Gastrocnemius medialis (tissue), 4 donors: ENCODE measurements at regions of chrX and their contacts with region 1.

Region 1: DNA sequence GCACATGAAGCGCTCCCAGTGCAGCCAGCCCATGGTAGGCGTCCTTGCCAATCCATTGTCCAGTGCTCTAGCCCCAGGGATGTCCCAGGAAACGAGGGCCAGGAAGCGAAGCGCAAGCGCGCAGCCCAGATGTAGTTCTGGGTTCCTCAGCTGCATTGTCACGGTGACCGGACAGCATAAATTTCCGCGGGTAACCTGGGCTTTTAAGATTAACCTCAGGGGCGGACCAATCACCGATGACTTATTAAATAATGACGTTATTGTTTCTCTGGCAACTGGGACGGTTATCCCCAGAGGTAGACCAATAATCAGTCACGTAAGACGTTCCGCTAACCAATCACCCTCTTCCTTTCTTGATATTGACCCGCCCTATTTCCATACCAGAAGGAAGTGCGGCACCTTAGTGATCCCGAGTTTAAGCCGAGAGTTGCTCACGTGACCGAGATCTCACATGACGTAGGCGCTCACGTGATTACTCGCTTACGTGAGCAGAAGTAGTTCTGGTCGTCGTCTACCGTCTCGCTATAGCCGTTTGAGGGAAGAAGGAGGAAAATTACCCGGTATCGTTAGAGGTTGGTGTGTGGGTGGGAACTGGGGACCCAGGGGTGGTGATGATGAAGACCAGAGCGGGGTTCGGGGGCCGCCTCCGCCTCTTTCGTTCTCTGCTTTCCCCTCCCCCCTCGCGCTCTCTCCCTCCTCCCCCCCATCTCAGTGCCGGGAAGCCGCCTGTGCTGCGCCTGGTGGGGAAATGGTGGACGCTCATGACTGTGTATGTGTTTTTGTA is at the starts of genes GLA and HNRNPH2:
- DNase-seq: peak; percentile 89 to 95
- ATAC-seq: peak; percentile 98 to 99
- H3K4me3 ChIP-seq: peak within 1 kb of the TSS; percentile 69 to 83 (median 70)
- H3K27ac ChIP-seq: peak within 1 kb of the TSS; percentile 89 to 96 (median 94)
- H3K4me1 ChIP-seq: peaks cover 20 to 24% of the 10 kb centered on the region in 2 donors
- H3K27me3 ChIP-seq: no peaks in the 10 kb centered on the region
- CTCF ChIP-seq: peak in 2 of 5 experiments; percentile 6 to 25
- POLR2A ChIP-seq: peak; percentile 78 to 83
- total RNA-seq, gene GLA: 13.4 to 16.3 (median 14.6) TPM
- total RNA-seq, gene HNRNPH2: 33.8 to 58.1 (median 43.3) TPM

Region 2: DNA sequence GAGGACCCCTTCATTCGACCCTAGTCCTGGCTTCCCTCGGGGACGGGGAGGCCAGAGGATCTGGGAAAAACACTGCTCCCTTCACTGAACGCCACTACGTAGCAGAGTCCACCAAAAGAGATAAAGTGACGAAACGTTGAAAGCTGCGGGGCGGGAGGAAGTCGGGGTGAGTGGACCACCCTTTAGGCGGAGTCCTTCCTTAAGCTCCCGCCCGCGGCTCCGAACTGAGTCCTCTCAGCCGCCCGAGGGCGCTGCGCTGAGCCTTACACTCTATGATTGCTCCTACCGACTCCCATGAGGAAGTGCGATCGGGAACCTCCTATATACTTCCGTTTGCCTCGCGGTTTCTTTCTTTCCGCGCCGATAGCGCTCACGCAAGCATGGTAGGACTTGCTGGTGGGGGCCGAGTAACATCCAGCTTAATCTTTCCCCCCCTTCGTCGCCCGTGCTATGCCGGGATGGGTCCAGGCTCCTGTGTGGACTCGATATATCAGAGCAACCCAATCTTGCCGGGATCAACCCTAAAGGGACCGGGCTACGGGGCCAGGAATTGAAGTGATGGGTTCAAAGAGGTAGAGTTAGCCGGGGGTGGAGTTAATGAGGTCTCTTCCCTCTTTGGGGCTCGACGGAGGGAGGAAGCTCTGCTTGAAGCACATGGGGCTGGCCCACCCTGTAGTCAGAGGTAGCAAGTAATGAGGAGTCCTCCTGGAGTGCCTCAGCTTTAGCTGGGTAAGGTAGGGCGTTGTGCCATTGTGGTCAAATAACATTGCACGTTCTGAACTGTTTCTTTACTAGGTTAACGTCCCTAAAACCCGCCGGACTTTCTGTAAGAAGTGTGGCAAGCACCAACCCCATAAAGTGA is 17.0 kb before region 1 on chrX and contains the start of gene RPL36A:
- in situ Hi-C with region 1: no loop called
- intact Hi-C with region 1: loop called (anchors 2 kb)
- DNase-seq: peak; percentile 71 to 82
- ATAC-seq: peak; percentile 99
- H3K4me3 ChIP-seq: peak within 1 kb of the TSS; percentile 65 to 73 (median 70)
- H3K27ac ChIP-seq: peak within 1 kb of the TSS; percentile 78 to 89 (median 81)
- H3K4me1 ChIP-seq: no peaks in the 10 kb centered on the region
- H3K27me3 ChIP-seq: no peaks in the 10 kb centered on the region
- CTCF ChIP-seq: peak; percentile 43 to 75 (median 55)
- POLR2A ChIP-seq: peak; percentile 86 to 87
- total RNA-seq, gene RPL36A: 627 to 1,470 (median 1,100) TPM

Region 3: DNA sequence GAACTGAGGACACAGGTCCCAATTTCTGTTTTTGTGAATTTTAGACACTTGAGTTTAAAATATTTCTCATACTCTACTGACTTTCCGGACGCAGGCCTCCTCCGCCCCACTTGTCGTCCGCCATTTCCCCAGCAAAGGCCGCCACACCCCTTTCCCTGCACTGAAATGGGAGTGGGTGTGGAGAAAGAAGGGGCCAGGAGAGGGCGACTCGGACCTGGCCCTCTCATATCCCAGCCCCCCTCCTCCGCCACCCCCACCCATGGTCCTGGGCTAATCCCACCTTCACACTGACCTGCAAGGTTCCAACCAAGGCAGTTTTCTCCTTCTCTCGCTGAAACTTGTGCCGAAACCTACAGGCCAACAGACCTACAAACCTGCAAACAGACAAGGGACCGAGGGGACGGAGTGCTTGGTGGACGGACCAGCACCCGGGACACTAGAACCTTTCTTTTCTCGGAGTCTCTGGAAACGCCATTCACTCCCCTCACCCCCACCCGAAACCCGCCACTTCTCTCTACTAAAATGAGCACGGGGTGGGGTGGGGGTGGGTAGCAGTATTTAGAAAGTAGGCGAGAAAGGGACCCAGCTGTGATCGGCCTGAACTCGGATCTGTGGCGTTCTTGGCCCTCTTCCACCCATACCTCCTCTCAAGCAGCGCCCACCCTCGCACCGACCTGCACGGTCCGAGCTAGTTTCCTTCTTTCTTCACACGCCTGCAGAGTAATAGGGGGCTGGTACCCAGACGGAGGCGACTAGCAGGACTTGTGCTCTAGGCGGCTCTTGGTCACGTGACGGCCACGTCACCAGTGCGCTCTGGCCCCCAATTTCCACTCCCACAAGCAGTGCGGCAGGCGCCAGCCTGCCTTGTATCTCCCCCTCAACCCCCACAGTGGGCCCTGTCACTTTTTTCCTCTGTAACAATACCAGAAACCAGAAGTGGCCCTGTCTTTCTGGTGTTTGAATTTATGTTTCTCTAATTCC is 209.6 kb after region 1 on chrX and contains the start of gene ARMCX6:
- in situ Hi-C with region 1: no loop called
- intact Hi-C with region 1: loop called (anchors 5 kb)
- DNase-seq: peak; percentile 51 to 59
- ATAC-seq: peak; percentile 76 to 84
- H3K4me3 ChIP-seq: peak within 1 kb of the TSS; percentile 55 to 70 (median 62)
- H3K27ac ChIP-seq: peak within 1 kb of the TSS; percentile 62 to 82 (median 74)
- H3K4me1 ChIP-seq: peaks cover 3 to 6% of the 10 kb centered on the region in 2 donors
- H3K27me3 ChIP-seq: no peaks in the 10 kb centered on the region
- CTCF ChIP-seq: peak in 3 of 5 experiments; percentile 19 to 50 (median 47)
- POLR2A ChIP-seq: peak in 1 of 2 donors; percentile 42
- total RNA-seq, gene ARMCX6: 4.5 to 12.6 (median 6.2) TPM

Region 4: GRCh38 chrX:101799387-101799786 is 391.4 kb after region 1 on chrX:
- in situ Hi-C with region 1: loop called in 2 of 4 experiments (anchors 10 to 25 kb)
- intact Hi-C with region 1: no loop called
- DNase-seq: peak; percentile 37 to 54
- ATAC-seq: peak; percentile 65 to 84
- H3K4me3 ChIP-seq: no peak overlapping the region
- H3K27ac ChIP-seq: no peak overlapping the region
- H3K4me1 ChIP-seq: no peaks in the 10 kb centered on the region
- H3K27me3 ChIP-seq: no peaks in the 10 kb centered on the region
- CTCF ChIP-seq: peak; percentile 39 to 69 (median 61)
- POLR2A ChIP-seq: no peak

Region 5: DNA sequence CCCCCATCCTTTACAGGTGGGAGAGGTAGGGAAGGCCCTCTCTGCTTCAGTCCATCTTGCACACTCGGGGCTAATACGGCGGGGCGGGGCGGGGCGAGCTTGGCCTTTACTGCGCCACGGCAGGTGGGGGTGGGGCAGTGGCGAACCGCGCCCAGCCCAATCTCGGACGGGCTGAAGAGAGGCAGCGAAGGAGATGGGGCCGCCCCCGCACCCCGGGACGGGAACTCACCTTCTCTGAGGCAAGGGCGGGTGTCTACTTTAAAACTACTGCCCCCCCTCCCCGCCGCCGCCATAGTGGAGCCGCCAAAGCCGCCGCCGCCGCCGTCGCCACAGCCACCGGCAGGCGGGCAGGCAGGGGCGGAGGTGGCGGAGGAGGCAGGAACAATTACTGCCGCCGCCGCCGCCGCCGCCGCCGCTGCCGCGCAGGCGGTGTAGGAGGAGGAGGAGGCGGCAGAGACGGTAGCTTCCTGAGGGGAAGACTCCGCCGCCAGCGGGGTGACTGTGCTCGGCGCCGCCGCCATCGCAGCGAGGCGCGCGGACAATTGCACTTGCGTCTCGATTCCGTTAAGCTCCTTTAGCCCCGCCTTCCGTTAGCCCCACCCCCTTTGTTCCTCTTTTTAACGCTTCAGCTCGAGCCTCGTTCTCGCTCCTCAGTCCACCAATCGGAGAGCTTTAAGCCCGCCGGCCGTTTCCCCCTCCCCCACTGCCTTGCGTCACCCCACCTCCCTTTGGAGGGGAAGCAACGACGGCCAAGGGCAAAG is 523.7 kb after region 1 on chrX and contains the start of gene ZMAT1:
- in situ Hi-C with region 1: loop called in 1 of 4 experiments (anchors 25 kb)
- intact Hi-C with region 1: loop called (anchors 10 kb)
- DNase-seq: peak; percentile 86 to 95
- ATAC-seq: peak; percentile 98 to 99
- H3K4me3 ChIP-seq: peak within 1 kb of the TSS; percentile 65 to 79 (median 71)
- H3K27ac ChIP-seq: peak within 1 kb of the TSS; percentile 87 to 98 (median 94)
- H3K4me1 ChIP-seq: no peaks in the 10 kb centered on the region
- H3K27me3 ChIP-seq: no peaks in the 10 kb centered on the region
- CTCF ChIP-seq: no peak
- POLR2A ChIP-seq: peak; percentile 86 to 90
- total RNA-seq, gene ZMAT1: 0.68 to 2.7 (median 1.2) TPM